ENCODE measurements at regions of chr3 and their contacts with region 1.

Region 1: GRCh38 chr3:184229394-184230080 is at the start of gene VWA5B2:
- DNase-seq: peak; percentile 57 to 80
- ATAC-seq: peak; percentile 80 to 94
- H3K4me3 ChIP-seq: peak within 1 kb of the TSS; percentile 59
- H3K27ac ChIP-seq: peak within 1 kb of the TSS; percentile 46 to 76; a peak in 4 of 6 replicates
- H3K4me1 ChIP-seq: peaks cover 6% of the 10 kb centered on the region; the same call in 2 of the 3 replicates
- CTCF ChIP-seq: no peak
- EP300 ChIP-seq: no peak
- POLR2A ChIP-seq: no peak
- RAD21 ChIP-seq: no peak
- polyA plus RNA-seq, gene VWA5B2: 0.11 and 0.37 TPM in 2 replicates

Region 2: GRCh38 chr3:184196536-184196935 is 33.0 kb before region 1 on chr3:
- CTCF ChIA-PET with region 1: interaction called, 16 read pairs
- POLR2A ChIA-PET with region 1: no interaction called
- DNase-seq: no peak
- ATAC-seq: no peak
- H3K4me3 ChIP-seq: no peak overlapping the region
- H3K27ac ChIP-seq: no peak overlapping the region
- H3K4me1 ChIP-seq: no peaks in the 10 kb centered on the region
- CTCF ChIP-seq: no peak
- EP300 ChIP-seq: no peak
- POLR2A ChIP-seq: no peak
- RAD21 ChIP-seq: no peak

Region 3: GRCh38 chr3:184218814-184219213 is 10.7 kb before region 1 on chr3:
- CTCF ChIA-PET with region 1: interaction called, 14 read pairs
- POLR2A ChIA-PET with region 1: no interaction called
- DNase-seq: no peak
- ATAC-seq: no peak
- H3K4me3 ChIP-seq: no peak overlapping the region
- H3K27ac ChIP-seq: no peak overlapping the region
- H3K4me1 ChIP-seq: no peaks in the 10 kb centered on the region
- CTCF ChIP-seq: no peak
- EP300 ChIP-seq: no peak
- POLR2A ChIP-seq: no peak
- RAD21 ChIP-seq: no peak

Region 4: DNA sequence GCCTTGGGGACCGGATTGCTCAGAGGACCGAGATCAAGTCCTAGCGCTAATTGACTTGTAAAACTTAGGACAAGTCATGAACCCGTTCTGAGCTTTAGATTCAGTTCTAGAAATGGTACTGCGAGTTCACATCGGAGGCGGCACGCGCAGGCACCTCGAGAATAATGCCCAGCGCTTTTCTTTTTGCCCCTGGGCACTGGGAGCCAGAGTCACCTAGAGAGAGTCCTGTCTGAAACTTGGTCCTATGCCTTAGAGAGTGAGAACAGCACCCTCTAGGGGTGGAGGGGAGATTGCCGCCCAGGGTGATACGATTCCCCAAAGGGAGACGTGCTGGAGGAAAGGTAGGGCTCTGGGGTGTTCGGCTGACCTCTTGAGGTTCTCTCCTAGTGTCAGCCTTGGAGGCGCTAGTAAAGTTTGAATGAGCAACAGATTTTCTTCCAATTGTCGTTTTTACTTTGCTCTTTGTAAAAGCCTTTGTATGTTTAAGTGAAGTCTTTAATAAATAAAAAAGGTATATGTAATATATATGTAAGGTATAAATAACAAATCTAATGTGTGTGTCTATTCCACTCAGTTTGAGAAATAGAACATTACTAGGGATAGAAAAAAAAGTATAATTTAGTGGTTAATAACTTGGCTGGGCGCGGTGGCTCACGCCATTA is 20.8 kb after region 1 on chr3:
- CTCF ChIA-PET with region 1: interaction called, 19 read pairs
- POLR2A ChIA-PET with region 1: no interaction called
- DNase-seq: peak; percentile 86 to 90
- ATAC-seq: peak; percentile 86 to 87
- H3K4me3 ChIP-seq: peak overlapping the region; percentile 57
- H3K27ac ChIP-seq: peak overlapping the region; percentile 79 to 98
- H3K4me1 ChIP-seq: peaks cover 8% of the 10 kb centered on the region; the same call in 2 of the 3 replicates
- CTCF ChIP-seq: peak; percentile 73
- EP300 ChIP-seq: no peak
- POLR2A ChIP-seq: no peak
- RAD21 ChIP-seq: peak; percentile 62 to 63